Psoas muscle (tissue), 8 donors: ENCODE measurements at regions of chr4 and their contacts with region 1.

Region 1: DNA sequence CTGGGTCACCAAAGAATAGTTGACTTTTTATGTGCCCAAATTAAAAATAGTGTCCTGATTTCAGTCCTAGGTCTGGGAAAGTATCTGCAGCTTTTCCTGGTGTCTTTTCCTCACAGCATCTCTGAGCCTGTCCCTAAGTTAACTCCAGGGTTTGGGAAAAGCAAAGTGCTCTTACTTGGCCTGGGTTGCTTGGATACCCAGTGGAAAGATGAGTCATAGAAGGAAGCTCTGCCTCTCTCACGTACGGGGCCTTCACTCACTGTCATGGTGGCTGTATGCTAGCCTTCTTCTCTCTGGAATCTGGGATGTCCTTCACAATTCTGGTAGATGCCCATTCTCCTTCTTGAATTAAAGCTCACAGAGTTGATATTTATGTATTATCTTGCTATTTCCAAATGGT is 607.3 kb downstream of the ANKRD50 start:
- DNase-seq: no peak
- ATAC-seq: no peak
- H3K4me3 ChIP-seq: no peak overlapping the region
- H3K27ac ChIP-seq: no peak overlapping the region
- H3K4me1 ChIP-seq: no peaks in the 10 kb centered on the region
- H3K27me3 ChIP-seq: no peaks in the 10 kb centered on the region
- CTCF ChIP-seq: no peak

Region 2: GRCh38 chr4:123776254-123776653 is 329.0 kb before region 1 on chr4:
- intact Hi-C with region 1: loop called (anchors 10 kb)
- DNase-seq: no peak
- ATAC-seq: no peak
- H3K4me3 ChIP-seq: no peak overlapping the region
- H3K27ac ChIP-seq: no peak overlapping the region
- H3K4me1 ChIP-seq: peaks cover 5% of the 10 kb centered on the region
- H3K27me3 ChIP-seq: no peaks in the 10 kb centered on the region
- CTCF ChIP-seq: no peak